Posterior vena cava (tissue), 2 donors: ENCODE measurements at regions of chr3 and their contacts with region 1.

Region 1: DNA sequence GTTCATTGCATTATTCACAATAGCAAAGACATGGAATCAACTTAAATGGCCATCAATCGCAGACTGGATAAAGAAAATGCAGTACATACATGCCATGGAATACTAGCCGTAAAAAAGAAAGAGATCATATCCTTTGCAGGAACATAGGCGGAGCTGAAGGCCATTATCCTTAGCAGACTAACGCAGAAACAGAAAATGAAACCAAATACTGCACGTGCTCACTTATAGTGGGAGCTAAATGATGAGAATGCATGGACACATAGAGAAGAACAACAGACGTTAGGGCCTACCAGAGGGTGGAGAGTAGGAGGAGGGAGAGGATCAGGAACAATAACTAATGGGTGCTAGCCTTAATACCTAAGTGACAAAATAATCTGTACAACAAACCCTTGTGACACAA is 57.9 kb downstream of the RASA2 start:
- DNase-seq: no peak

Region 2: GRCh38 chr3:141487521-141488252 is 57.0 kb before region 1 on chr3:
- intact Hi-C with region 1: loop called in 1 of 2 experiments (anchors 10 kb)
- DNase-seq: peak; percentile 87

Region 3: DNA sequence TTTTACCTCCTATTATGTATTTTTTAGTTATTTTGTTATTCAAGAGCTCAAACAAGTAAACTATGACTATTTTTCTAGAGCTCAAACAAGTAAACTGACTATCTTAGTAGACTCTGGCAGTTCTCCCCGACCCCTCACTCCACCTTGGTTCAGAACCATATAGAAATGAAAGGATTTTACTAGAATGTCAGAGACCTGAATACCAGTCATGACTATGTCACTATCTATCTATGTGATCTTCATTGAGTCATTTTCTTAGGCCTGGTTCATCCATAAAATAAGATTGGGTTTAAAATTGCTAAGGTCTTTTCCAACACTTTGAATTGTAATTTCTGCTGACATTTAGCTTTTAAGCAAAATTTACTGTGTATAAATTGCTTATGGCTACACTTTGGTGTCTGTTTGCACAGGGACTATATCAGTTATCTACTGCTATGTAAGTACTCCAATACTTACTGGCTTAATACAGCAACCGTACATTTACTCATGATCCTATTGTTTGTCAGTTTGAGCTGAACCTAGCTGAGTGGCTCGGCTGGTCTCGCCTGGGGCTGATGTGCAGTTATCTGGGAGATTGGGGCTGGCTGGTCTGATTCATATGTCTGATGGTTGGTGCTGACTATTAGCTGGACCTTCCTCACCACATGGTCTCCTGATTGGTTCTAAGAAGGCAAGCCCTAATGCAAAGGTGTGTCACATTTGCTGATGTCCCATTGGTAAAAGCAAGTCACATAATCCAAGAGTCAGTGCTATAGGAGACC is 20.9 kb before region 1 on chr3:
- intact Hi-C with region 1: loop called in 1 of 2 experiments (anchors 1 kb)
- DNase-seq: no peak

Region 4: GRCh38 chr3:141905129-141905528 is 360.4 kb after region 1 on chr3:
- intact Hi-C with region 1: no loop called
- DNase-seq: no peak